ENCODE measurements at regions of chr15 and their contacts with region 1.

Region 1: DNA sequence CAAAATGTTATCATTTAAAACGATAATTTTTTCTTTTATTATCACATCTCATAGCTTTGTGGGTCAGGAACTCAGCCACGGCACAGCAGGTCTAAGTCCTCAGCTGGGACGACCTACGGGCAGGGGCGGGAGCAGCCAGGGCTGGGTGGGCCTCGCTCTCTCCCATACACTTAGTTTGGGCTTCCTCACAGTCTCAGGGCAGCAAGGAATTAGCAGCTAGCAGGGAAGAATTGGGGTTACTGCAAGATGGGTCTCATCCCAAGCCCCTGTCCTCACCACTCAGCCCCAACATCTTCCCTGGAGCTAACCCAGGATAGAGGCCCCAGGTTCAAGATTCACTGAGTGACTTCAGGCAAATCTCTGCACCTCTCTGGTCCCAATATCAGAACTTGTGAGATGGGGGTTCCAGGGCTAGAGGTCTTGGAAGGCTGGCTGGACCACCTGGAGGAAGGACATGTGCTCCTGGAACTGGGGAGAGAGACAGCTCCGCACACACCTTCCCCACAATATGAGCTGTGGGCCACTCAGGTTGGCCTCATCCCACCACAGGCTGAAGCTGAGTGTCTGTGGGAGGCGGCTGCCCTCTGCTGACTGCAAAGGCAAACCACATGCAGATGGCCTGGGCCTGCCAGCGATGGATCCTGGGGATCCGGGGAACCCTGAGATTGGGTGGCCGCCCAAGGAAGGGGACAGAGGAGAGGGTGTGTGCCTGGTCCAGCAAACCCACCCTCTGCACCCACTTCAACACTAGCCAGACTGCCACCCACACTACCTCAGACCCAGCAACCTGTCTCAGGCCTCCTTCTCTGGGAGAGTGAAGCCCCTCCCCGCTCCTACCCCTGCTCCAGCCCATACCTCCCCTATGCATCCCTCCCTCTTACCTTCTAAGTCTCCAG is 45.0 kb downstream of the CYP11A1 start:
- DNase-seq: peak; percentile 55 to 83 (median 68)
- ATAC-seq: peak in 3 of 4 donors; percentile 62 to 67 (median 66)
- H3K4me3 ChIP-seq: no peak overlapping the region
- H3K27ac ChIP-seq: no peak overlapping the region
- H3K4me1 ChIP-seq: peaks cover 1 to 31% (median 28%) of the 10 kb centered on the region in 12 donors
- H3K27me3 ChIP-seq: no peaks in the 10 kb centered on the region
- CTCF ChIP-seq: peak; percentile 81 to 90 (median 88)
- POLR2A ChIP-seq: no peak

Region 2: GRCh38 chr15:73982222-73982962 is 340.0 kb before region 1 on chr15:
- intact Hi-C with region 1: loop called in 5 of 10 experiments (anchors 5 to 10 kb)
- DNase-seq: peak; percentile 86 to 96 (median 92)
- ATAC-seq: peak; percentile 87 to 93 (median 90)
- H3K4me3 ChIP-seq: peak overlapping the region in 6 of 12 donors; percentile 6 to 17 (median 10)
- H3K27ac ChIP-seq: peak overlapping the region; percentile 90 to 99 (median 96)
- H3K4me1 ChIP-seq: peaks cover 20 to 80% (median 66%) of the 10 kb centered on the region in 12 donors
- H3K27me3 ChIP-seq: no peaks in the 10 kb centered on the region
- CTCF ChIP-seq: no peak
- POLR2A ChIP-seq: peak in 1 of 2 donors; percentile 22

Region 3: GRCh38 chr15:74062671-74063070 is 259.8 kb before region 1 on chr15:
- intact Hi-C with region 1: loop called in 2 of 10 experiments (anchors 5 to 10 kb)
- DNase-seq: no peak
- ATAC-seq: no peak
- H3K4me3 ChIP-seq: no peak overlapping the region
- H3K27ac ChIP-seq: no peak overlapping the region
- H3K4me1 ChIP-seq: no peaks in the 10 kb centered on the region
- H3K27me3 ChIP-seq: no peaks in the 10 kb centered on the region
- CTCF ChIP-seq: no peak
- POLR2A ChIP-seq: no peak

Region 4: GRCh38 chr15:74134387-74135027 is 187.9 kb before region 1 on chr15:
- intact Hi-C with region 1: loop called in 7 of 10 experiments (anchors 5 kb)
- DNase-seq: peak; percentile 34 to 68 (median 54)
- ATAC-seq: peak in 2 of 4 donors; percentile 42 to 44
- H3K4me3 ChIP-seq: no peak overlapping the region
- H3K27ac ChIP-seq: peak overlapping the region in 2 of 12 donors; percentile 73 to 97
- H3K4me1 ChIP-seq: peaks cover 0 to 68% (median 32%) of the 10 kb centered on the region in 12 donors
- H3K27me3 ChIP-seq: peaks cover 9 to 96% (median 56%) of the 10 kb centered on the region in 9 donors
- CTCF ChIP-seq: peak; percentile 17 to 59 (median 40)
- POLR2A ChIP-seq: no peak

Region 5: GRCh38 chr15:74307827-74308644 is 14.4 kb before region 1 on chr15:
- intact Hi-C with region 1: loop called in 1 of 10 experiments (anchors 1 kb)
- DNase-seq: peak in 4 of 5 donors; percentile 38 to 61 (median 50)
- ATAC-seq: peak; percentile 78 to 91 (median 82)
- H3K4me3 ChIP-seq: no peak overlapping the region
- H3K27ac ChIP-seq: no peak overlapping the region
- H3K4me1 ChIP-seq: peaks cover 0 to 12% (median 0%) of the 10 kb centered on the region in 12 donors
- H3K27me3 ChIP-seq: peaks cover 0 to 36% (median 12%) of the 10 kb centered on the region in 9 donors
- CTCF ChIP-seq: peak; percentile 47 to 78 (median 72)
- POLR2A ChIP-seq: no peak

Region 6: GRCh38 chr15:74460871-74461846 is 138.7 kb after region 1 on chr15 and contains the start of gene UBL7:
- intact Hi-C with region 1: no loop called
- DNase-seq: peak; percentile 97 to 98 (median 97)
- ATAC-seq: peak; percentile 99 to 100 (median 100)
- H3K4me3 ChIP-seq: peak within 1 kb of the TSS; percentile 57 to 96 (median 78)
- H3K27ac ChIP-seq: peak within 1 kb of the TSS; percentile 49 to 94 (median 86)
- H3K4me1 ChIP-seq: peaks cover 0 to 22% (median 11%) of the 10 kb centered on the region in 12 donors
- H3K27me3 ChIP-seq: no peaks in the 10 kb centered on the region
- CTCF ChIP-seq: peak in 5 of 12 donors; percentile 19 to 47 (median 32)
- POLR2A ChIP-seq: peak; percentile 27 to 88
- total RNA-seq, gene UBL7: 40.6 to 102 (median 54.5) TPM